ENCODE measurements at regions of chr7 and their contacts with region 1.

Region 1: GRCh38 chr7:92609921-92610518 is 19.8 kb upstream of the FAM133B start:
- DNase-seq: no peak
- ATAC-seq: peak in 1 of 2 donors; percentile 42

Region 2: GRCh38 chr7:93062599-93062998 is 452.6 kb after region 1 on chr7:
- intact Hi-C with region 1: loop called in 1 of 2 experiments (anchors 10 kb)
- DNase-seq: no peak
- ATAC-seq: no peak

Measured in left cardiac atrium (tissue), 4 donors.